MCF 10A (cell line): ENCODE measurements at regions of chr2 and their contacts with region 1.

Region 1: GRCh38 chr2:36966370-36967235 is at the start of gene STRN:
- DNase-seq: peak; percentile 95
- H3K4me3 Mint-ChIP-seq: peak within 1 kb of the TSS; percentile 90
- H3K27ac Mint-ChIP-seq: peak within 1 kb of the TSS; percentile 90
- H3K4me1 Mint-ChIP-seq: peaks cover 42% of the 10 kb centered on the region
- H3K27me3 Mint-ChIP-seq: no peaks in the 10 kb centered on the region
- CTCF ChIP-seq: no peak
- total RNA-seq, gene STRN: 24.9 and 25.3 TPM in 2 replicates

Region 2: DNA sequence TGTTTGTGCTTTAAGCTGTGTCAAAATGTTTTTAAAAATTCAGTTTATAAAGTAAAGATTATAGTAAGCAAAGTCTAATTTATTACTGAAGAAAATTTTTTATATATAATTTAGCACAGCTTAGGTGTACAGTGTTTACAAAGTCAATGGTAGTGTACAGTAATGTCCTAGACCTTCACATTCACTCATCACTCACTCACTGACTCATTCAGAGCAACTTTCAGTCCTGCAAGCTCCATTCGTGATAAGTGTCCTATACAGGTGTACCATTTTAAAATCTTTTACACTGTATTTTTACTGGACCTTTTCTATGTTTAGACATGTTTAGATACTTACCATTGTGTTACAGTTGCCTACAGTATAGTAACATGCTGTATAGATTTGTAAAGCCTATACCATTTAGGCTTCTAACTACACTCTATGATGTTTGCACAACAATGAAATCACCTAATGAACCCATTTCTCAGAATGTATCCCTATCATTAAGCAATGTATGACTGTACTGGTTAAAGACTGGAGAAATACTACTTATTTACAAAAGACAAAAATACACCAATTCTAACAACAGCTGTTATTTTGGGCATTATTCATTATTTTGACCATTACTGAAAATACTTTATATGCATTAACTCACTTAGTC is 95.4 kb before region 1 on chr2:
- CTCF ChIA-PET with region 1: no interaction called
- POLR2A ChIA-PET with region 1: interaction called, 10 read pairs
- intact Hi-C with region 1: no loop called
- DNase-seq: no peak
- H3K4me3 Mint-ChIP-seq: no peak overlapping the region
- H3K27ac Mint-ChIP-seq: no peak overlapping the region
- H3K4me1 Mint-ChIP-seq: no peaks in the 10 kb centered on the region
- H3K27me3 Mint-ChIP-seq: no peaks in the 10 kb centered on the region
- CTCF ChIP-seq: no peak

Region 3: DNA sequence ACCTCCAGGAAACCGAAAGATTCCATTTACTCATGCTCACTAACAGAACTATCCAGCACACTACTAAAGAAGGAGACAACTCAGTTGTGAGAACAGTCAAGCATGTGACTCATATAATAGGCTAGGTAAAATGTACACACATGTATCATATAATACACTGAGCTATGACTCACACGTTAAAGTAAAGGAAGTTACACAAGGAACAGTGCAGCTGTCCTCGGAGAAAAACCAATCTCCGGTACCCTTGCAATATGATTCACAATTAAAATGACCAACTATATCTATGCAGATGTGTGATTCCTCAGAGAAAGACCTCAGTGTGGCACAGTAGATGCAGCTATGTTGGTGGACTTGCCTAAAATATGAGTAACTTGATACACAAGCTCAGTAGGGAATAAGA is 76.8 kb before region 1 on chr2:
- CTCF ChIA-PET with region 1: no interaction called
- POLR2A ChIA-PET with region 1: interaction called, 13 read pairs
- intact Hi-C with region 1: no loop called
- DNase-seq: peak; percentile 92
- H3K4me3 Mint-ChIP-seq: peak overlapping the region; percentile 57
- H3K27ac Mint-ChIP-seq: peak overlapping the region; percentile 74
- H3K4me1 Mint-ChIP-seq: peaks cover 6% of the 10 kb centered on the region
- H3K27me3 Mint-ChIP-seq: no peaks in the 10 kb centered on the region
- CTCF ChIP-seq: no peak

Region 4: GRCh38 chr2:36918307-36918706 is 48.3 kb before region 1 on chr2:
- CTCF ChIA-PET with region 1: interaction called, 5 read pairs
- POLR2A ChIA-PET with region 1: interaction called, 10 read pairs
- intact Hi-C with region 1: no loop called
- DNase-seq: no peak
- H3K4me3 Mint-ChIP-seq: no peak overlapping the region
- H3K27ac Mint-ChIP-seq: no peak overlapping the region
- H3K4me1 Mint-ChIP-seq: peaks cover 7% of the 10 kb centered on the region
- H3K27me3 Mint-ChIP-seq: no peaks in the 10 kb centered on the region
- CTCF ChIP-seq: peak; percentile 21

Region 5: GRCh38 chr2:36951574-36951973 is 15.0 kb before region 1 on chr2:
- CTCF ChIA-PET with region 1: no interaction called
- POLR2A ChIA-PET with region 1: interaction called, 36 read pairs
- intact Hi-C with region 1: no loop called
- DNase-seq: peak; percentile 72
- H3K4me3 Mint-ChIP-seq: peak overlapping the region; percentile 28
- H3K27ac Mint-ChIP-seq: peak overlapping the region; percentile 67
- H3K4me1 Mint-ChIP-seq: peaks cover 31% of the 10 kb centered on the region
- H3K27me3 Mint-ChIP-seq: no peaks in the 10 kb centered on the region
- CTCF ChIP-seq: no peak

Region 6: DNA sequence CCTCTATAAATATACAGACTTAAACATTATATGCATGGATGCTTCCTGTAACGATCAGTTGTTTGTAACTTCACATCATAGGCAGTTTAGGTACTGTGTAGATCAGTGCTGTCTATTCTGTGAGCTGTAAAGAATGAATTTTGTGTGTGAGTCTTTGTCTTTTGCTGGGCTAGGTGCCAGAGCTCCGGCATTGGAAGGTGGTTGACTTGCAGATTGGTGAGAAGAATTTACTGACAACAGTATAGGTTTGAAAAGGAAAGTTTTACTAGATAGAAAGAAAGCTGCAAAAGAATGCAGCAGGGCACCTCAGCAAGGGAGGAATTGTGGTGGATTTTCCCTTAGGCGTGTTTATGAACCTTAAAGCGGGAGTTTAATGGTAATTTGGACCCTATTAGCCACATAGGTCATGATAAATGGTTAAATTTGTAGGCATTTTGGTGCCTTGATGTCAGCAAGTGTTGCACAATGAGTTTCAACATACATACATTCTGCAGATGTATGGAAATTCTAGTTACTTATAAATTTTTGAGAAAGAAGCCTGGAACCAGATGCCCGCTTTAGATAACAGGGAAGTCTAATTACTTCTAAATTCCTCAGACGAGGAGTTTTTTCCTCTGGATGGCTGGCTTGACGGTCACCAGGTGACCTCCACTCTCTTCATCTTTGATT is 371.2 kb after region 1 on chr2:
- CTCF ChIA-PET with region 1: no interaction called
- POLR2A ChIA-PET with region 1: no interaction called
- intact Hi-C with region 1: no loop called
- DNase-seq: no peak
- H3K4me3 Mint-ChIP-seq: no peak overlapping the region
- H3K27ac Mint-ChIP-seq: no peak overlapping the region
- H3K4me1 Mint-ChIP-seq: no peaks in the 10 kb centered on the region
- H3K27me3 Mint-ChIP-seq: no peaks in the 10 kb centered on the region
- CTCF ChIP-seq: no peak